Activated CD4-positive, alpha-beta T cell treated with anti-CD3 and anti-CD28 coated beads, Interleukin-2, amount 10 ng/mL, durations not matched to agents 24 days and 14 days (primary cell): ENCODE measurements at regions of chr5 and their contacts with region 1.

Region 1: GRCh38 chr5:39209924-39210323 is 9.4 kb downstream of the FYB1 start:
- DNase-seq: peak; percentile 95
- H3K4me3 Mint-ChIP-seq: peak overlapping the region; percentile 75
- H3K27ac Mint-ChIP-seq: peak overlapping the region; percentile 92
- H3K4me1 Mint-ChIP-seq: peaks cover 79% of the 10 kb centered on the region
- H3K27me3 Mint-ChIP-seq: no peaks in the 10 kb centered on the region

Region 2: DNA sequence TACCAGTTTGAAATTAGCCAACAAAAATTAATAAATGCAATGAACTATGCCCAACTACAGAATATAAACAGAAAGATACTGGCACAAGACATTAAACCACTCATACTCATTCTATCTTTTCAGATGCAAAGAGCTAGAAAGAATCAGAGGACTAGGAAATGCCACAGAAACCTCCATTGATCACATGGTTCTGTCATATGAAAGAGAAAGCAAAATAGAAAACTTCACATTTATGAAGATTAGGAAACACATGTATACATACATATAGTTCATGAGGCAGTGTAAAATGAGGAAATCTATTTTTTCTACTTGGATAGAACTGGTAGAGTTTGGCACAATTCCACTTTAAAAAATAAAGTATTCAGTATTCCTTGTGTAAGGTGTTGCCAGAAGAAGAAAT is 1194.7 kb after region 1 on chr5:
- intact Hi-C with region 1: loop called (anchors 2 kb)
- DNase-seq: peak; percentile 80
- H3K4me3 Mint-ChIP-seq: peak overlapping the region; percentile 21
- H3K27ac Mint-ChIP-seq: peak overlapping the region; percentile 75
- H3K4me1 Mint-ChIP-seq: peaks cover 71% of the 10 kb centered on the region
- H3K27me3 Mint-ChIP-seq: no peaks in the 10 kb centered on the region